ENCODE measurements at regions of chr6 and their contacts with region 1.

Region 1: DNA sequence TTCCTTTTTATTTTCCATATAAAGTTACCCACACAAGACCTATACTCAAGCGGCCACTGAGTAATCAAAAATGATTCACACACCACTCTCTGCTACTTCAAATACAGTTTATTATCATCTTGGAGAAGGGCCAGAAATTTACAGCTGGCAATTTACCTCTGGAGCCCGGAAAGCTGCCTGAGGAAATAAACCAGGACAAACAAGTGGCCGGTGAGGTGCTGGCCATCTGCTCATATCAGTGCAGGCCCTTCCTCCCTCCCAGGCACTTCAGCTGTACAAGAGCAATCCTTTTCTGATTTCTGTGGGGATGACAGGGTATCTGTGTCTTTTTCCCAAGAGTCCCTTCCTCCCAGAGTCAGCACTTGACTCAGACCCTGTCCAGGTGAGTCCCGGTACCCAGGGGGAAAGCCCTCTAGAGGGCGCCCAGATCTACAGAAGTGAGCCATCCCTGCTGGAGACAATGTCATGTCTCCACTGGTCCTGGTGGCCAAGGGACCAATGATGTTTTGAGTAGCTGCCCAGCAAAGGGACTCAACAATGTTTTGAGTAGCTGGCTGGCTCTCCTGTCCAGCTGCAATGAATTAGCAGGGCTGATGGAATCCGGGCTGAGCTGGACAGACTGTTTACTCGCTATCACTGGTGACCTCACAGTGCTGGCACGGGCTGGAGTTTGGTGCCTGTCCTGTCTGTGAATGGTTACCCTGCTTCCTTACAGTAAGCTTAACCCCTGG is 23.6 kb downstream of the LRP11 start:
- DNase-seq: peak in 1 of 2 experiments; percentile 84
- H3K4me3 ChIP-seq: no peak overlapping the region
- H3K27ac ChIP-seq: no peak overlapping the region
- H3K4me1 ChIP-seq: no peaks in the 10 kb centered on the region
- H3K27me3 ChIP-seq: no peaks in the 10 kb centered on the region
- CTCF ChIP-seq: peak; percentile 80 to 91 (median 85)
- EP300 ChIP-seq: no peak
- POLR2A ChIP-seq: no peak
- RAD21 ChIP-seq: peak; percentile 84 to 88

Region 2: DNA sequence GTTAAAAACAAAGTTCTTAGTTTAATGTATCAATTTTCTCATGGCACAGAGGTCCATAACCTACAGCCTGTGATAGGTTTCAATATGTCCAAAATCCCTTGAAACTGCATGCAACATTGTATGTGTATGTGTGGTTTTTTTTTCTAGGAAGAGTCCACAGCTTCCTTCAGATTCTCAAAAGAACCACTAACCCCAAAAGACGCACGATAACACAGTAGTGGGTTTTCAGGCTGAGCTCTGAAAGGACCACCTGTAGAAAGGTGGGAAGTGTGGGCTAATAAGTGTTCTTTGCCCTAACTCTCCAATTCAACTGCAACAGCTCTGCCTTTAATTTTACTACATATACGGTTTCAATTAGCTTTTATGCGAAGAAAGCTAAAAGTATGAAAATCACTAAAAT is 180.5 kb before region 1 on chr6:
- CTCF ChIA-PET with region 1: no interaction called
- POLR2A ChIA-PET with region 1: no interaction called
- DNase-seq: no peak
- H3K4me3 ChIP-seq: no peak overlapping the region
- H3K27ac ChIP-seq: no peak overlapping the region
- H3K4me1 ChIP-seq: no peaks in the 10 kb centered on the region
- H3K27me3 ChIP-seq: no peaks in the 10 kb centered on the region
- CTCF ChIP-seq: no peak
- EP300 ChIP-seq: no peak
- POLR2A ChIP-seq: no peak
- RAD21 ChIP-seq: no peak

Region 3: DNA sequence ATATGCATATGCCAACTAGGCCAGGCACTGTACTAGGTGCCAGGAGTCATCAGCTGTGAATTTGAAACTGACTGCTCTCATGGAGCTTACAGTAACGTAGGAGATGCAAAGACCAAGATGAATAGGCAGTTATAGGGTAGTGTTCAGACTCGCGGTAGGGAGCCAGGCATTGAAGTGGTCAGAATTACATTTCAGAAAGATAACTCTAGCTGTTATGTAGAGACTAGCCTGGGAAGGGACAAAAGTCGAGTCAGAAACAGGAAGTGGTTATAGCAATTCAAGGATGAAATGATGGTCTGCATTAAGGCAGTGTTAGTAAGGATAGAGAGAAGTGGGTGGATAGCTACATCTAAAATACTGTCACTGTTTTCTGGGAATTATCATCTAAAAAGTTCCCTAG is 34.4 kb before region 1 on chr6:
- CTCF ChIA-PET with region 1: no interaction called
- POLR2A ChIA-PET with region 1: no interaction called
- DNase-seq: no peak
- H3K4me3 ChIP-seq: no peak overlapping the region
- H3K27ac ChIP-seq: no peak overlapping the region
- H3K4me1 ChIP-seq: no peaks in the 10 kb centered on the region
- H3K27me3 ChIP-seq: no peaks in the 10 kb centered on the region
- CTCF ChIP-seq: no peak
- EP300 ChIP-seq: no peak
- POLR2A ChIP-seq: no peak
- RAD21 ChIP-seq: no peak

Region 4: GRCh38 chr6:149852180-149852579 is 11.7 kb after region 1 on chr6:
- CTCF ChIA-PET with region 1: interaction called, 54 read pairs
- POLR2A ChIA-PET with region 1: no interaction called
- DNase-seq: no peak
- H3K4me3 ChIP-seq: no peak overlapping the region
- H3K27ac ChIP-seq: no peak overlapping the region
- H3K4me1 ChIP-seq: peaks cover 0 to 7% (median 0%) of the 10 kb centered on the region in 4 experiments; a peak in 4 of 7 replicates
- H3K27me3 ChIP-seq: no peaks in the 10 kb centered on the region
- CTCF ChIP-seq: no peak
- EP300 ChIP-seq: no peak
- POLR2A ChIP-seq: no peak
- RAD21 ChIP-seq: no peak

Region 5: GRCh38 chr6:149863697-149864577 is 23.4 kb after region 1 on chr6 and contains the start of gene LRP11:
- CTCF ChIA-PET with region 1: interaction called, 33 read pairs
- POLR2A ChIA-PET with region 1: no interaction called
- DNase-seq: peak; percentile 66 to 93
- H3K4me3 ChIP-seq: peak within 1 kb of the TSS; percentile 48 to 80 (median 74)
- H3K27ac ChIP-seq: peak within 1 kb of the TSS; percentile 84
- H3K4me1 ChIP-seq: peaks cover 5 to 20% (median 11%) of the 10 kb centered on the region in 4 experiments
- H3K27me3 ChIP-seq: peaks cover 0 to 13% (median 5%) of the 10 kb centered on the region in 4 experiments; a peak in 5 of 7 replicates
- CTCF ChIP-seq: no peak
- EP300 ChIP-seq: no peak
- POLR2A ChIP-seq: peak; percentile 33 to 78
- RAD21 ChIP-seq: no peak
- total RNA-seq, gene LRP11: 20.0 TPM in 2 replicates

Region 6: GRCh38 chr6:149895833-149896271 is 55.3 kb after region 1 on chr6:
- CTCF ChIA-PET with region 1: interaction called, 13 read pairs
- POLR2A ChIA-PET with region 1: no interaction called
- DNase-seq: no peak
- H3K4me3 ChIP-seq: no peak overlapping the region
- H3K27ac ChIP-seq: no peak overlapping the region
- H3K4me1 ChIP-seq: peaks cover 0 to 4% (median 0%) of the 10 kb centered on the region in 4 experiments; a peak in 2 of 7 replicates
- H3K27me3 ChIP-seq: no peaks in the 10 kb centered on the region
- CTCF ChIP-seq: no peak
- EP300 ChIP-seq: no peak
- POLR2A ChIP-seq: no peak
- RAD21 ChIP-seq: no peak

Region 7: GRCh38 chr6:149903938-149904611 is 63.6 kb after region 1 on chr6:
- CTCF ChIA-PET with region 1: interaction called, 26 read pairs
- POLR2A ChIA-PET with region 1: no interaction called
- DNase-seq: no peak
- H3K4me3 ChIP-seq: no peak overlapping the region
- H3K27ac ChIP-seq: no peak overlapping the region
- H3K4me1 ChIP-seq: no peaks in the 10 kb centered on the region
- H3K27me3 ChIP-seq: no peaks in the 10 kb centered on the region
- CTCF ChIP-seq: peak in 1 of 3 experiments; percentile 14; a peak in 1 of 4 replicates
- EP300 ChIP-seq: no peak
- POLR2A ChIP-seq: no peak
- RAD21 ChIP-seq: no peak

Region 8: DNA sequence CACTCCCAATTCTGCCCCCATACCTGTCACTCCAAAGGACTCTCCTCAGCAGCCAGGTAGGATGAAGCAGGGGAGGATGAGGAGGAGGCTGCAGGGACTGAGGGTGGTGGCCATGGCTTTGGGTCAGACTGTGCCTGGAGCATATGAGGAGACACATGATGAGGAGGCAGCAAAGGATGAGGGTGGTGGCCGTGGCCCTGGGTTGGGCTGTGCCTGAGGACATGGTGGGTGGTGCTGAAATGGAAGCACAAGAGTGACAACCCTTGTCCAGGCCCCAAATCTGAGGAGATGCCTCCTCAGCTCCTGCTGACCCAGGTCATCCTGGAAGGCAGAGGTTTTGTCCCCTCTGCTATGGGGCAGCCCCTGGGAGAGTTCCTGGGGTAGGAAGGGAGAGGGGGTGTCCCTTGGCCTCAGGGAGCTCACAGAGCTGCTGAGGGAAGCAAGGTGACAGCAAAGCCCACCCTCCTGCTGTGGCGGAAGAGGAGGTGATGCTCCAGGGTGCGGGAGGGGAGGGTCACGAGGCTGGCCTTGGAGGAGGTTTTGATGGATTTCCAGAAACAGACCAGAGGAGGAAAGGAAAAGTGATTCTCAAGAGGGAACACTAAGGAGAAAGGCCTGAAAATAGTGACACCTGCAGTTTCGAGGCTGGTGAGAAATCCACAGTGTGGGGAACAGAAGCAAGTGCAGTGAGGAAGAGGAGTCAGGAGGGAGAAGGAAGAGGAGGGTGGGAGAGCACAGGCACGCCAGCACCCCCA is 77.8 kb after region 1 on chr6:
- CTCF ChIA-PET with region 1: interaction called, 19 read pairs
- POLR2A ChIA-PET with region 1: no interaction called
- DNase-seq: peak in 1 of 2 experiments; percentile 14
- H3K4me3 ChIP-seq: no peak overlapping the region
- H3K27ac ChIP-seq: no peak overlapping the region
- H3K4me1 ChIP-seq: peaks cover 0 to 5% (median 0%) of the 10 kb centered on the region in 4 experiments; a peak in 2 of 7 replicates
- H3K27me3 ChIP-seq: peaks cover 15 to 32% (median 28%) of the 10 kb centered on the region in 4 experiments
- CTCF ChIP-seq: no peak
- EP300 ChIP-seq: no peak
- POLR2A ChIP-seq: no peak
- RAD21 ChIP-seq: no peak

Region 9: GRCh38 chr6:149925974-149926777 is 85.7 kb after region 1 on chr6:
- CTCF ChIA-PET with region 1: interaction called, 27 read pairs
- POLR2A ChIA-PET with region 1: no interaction called
- DNase-seq: peak in 1 of 2 experiments; percentile 96
- H3K4me3 ChIP-seq: peak overlapping the region; percentile 13 to 64 (median 56); a peak in 7 of 8 replicates
- H3K27ac ChIP-seq: no peak overlapping the region
- H3K4me1 ChIP-seq: peaks cover 0 to 5% (median 0%) of the 10 kb centered on the region in 4 experiments; a peak in 2 of 7 replicates
- H3K27me3 ChIP-seq: peaks cover 37 to 53% (median 50%) of the 10 kb centered on the region in 4 experiments
- CTCF ChIP-seq: peak; percentile 86 to 92 (median 91)
- EP300 ChIP-seq: no peak
- POLR2A ChIP-seq: no peak
- RAD21 ChIP-seq: peak; percentile 89